Left lung (tissue), 14 donors: ENCODE measurements at regions of chr15 and their contacts with region 1.

Region 1: GRCh38 chr15:68775671-68776476 is 44.8 kb downstream of the ANP32A start:
- DNase-seq: peak in 2 of 4 donors; percentile 77 to 79
- ATAC-seq: peak; percentile 54
- H3K4me3 ChIP-seq: no peak overlapping the region
- H3K27ac ChIP-seq: peak overlapping the region; percentile 42 to 60
- H3K4me1 ChIP-seq: peaks cover 0 to 16% of the 10 kb centered on the region in 2 donors
- H3K27me3 ChIP-seq: no peaks in the 10 kb centered on the region
- CTCF ChIP-seq: no peak

Region 2: GRCh38 chr15:68598171-68599152 is 177.4 kb before region 1 on chr15:
- intact Hi-C with region 1: no loop called
- DNase-seq: no peak
- ATAC-seq: peak; percentile 45
- H3K4me3 ChIP-seq: no peak overlapping the region
- H3K27ac ChIP-seq: no peak overlapping the region
- H3K4me1 ChIP-seq: peaks cover 0 to 7% of the 10 kb centered on the region in 2 donors
- H3K27me3 ChIP-seq: no peaks in the 10 kb centered on the region
- CTCF ChIP-seq: no peak

Region 3: DNA sequence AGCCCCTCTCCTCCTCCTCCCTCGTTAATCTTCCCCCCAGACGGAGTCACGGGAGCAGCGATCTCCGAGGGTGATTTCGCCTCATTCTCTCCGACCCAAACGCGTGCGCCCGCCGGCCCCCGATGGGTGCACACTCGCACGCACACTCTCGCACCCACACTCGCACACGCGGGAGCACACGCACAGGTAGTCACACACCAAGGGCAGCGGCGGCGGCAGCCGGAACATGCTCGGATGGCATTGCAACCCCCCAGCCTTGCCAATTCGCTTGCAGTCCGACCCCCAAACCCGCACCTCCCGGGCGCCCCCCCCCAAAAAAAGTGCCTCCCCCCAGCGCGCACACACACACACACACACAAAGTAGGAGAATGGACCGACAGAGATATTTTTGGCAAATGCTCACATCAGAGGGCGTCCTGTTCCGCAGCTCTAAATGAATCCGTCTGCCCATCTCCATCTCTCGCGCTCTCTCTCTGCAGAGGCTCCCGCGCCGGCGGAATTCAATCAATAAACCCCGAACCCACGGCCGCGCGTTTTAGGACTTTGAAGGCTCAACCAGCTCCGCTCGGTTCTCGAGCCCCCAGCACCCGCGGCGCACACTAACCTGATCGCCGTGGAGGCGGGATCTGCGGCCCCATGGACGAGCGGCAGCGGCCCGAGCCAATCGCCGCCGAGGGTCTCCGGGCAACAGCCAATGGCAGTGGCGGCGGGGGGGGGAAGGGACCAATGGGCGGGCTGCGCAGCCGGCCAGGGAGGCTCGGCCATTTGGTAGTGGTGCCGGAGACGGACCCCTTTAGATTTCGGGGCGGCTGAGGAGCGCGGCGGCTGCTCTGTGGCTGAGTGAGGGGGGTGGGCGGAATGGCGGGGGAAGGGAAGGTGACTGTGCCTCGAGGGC is 44.7 kb after region 1 on chr15 and contains the start of gene ANP32A:
- intact Hi-C with region 1: loop called in 1 of 2 experiments (anchors 10 kb)
- DNase-seq: peak; percentile 95 to 96 (median 95)
- ATAC-seq: peak; percentile 82
- H3K4me3 ChIP-seq: peak within 1 kb of the TSS; percentile 66 to 90
- H3K27ac ChIP-seq: peak within 1 kb of the TSS; percentile 98 to 99
- H3K4me1 ChIP-seq: peaks cover 18 to 32% of the 10 kb centered on the region in 2 donors
- H3K27me3 ChIP-seq: no peaks in the 10 kb centered on the region
- CTCF ChIP-seq: no peak
- polyA plus RNA-seq, gene ANP32A: 280 to 346 (median 303) TPM

Region 4: GRCh38 chr15:68862415-68862814 is 86.5 kb after region 1 on chr15:
- intact Hi-C with region 1: no loop called
- DNase-seq: no peak
- ATAC-seq: no peak
- H3K4me3 ChIP-seq: no peak overlapping the region
- H3K27ac ChIP-seq: no peak overlapping the region
- H3K4me1 ChIP-seq: no peaks in the 10 kb centered on the region
- H3K27me3 ChIP-seq: no peaks in the 10 kb centered on the region
- CTCF ChIP-seq: no peak

Region 5: DNA sequence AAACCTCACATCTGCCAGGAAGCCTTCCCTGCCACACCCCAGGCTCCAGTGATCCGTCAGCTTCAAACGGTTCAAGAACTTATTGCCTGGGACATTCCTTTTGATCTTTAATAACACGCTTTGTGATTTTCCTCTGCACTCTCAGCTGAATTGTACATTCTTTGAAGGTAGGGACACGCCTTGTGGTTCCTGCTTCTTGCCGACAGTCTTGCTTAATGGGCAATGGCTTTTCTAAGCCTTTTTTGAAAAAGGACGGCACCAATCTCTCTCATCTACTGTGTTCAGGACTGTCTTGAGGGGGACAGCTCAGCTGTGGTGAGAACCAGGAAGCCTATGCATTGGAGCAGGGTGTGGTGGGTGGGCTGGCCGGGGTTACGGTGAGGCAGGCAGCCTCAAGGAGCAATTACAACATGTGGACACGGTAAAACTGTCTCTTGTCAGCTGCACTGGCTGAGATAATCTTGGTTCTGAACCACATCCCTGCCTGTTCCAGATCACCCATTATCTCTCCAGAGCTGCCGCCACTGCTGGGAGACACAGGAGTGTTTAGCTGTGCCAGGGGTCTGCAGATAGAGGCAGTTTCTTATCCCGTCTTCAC is 338.6 kb after region 1 on chr15:
- intact Hi-C with region 1: no loop called
- DNase-seq: no peak
- ATAC-seq: peak; percentile 27
- H3K4me3 ChIP-seq: no peak overlapping the region
- H3K27ac ChIP-seq: no peak overlapping the region
- H3K4me1 ChIP-seq: no peaks in the 10 kb centered on the region
- H3K27me3 ChIP-seq: no peaks in the 10 kb centered on the region
- CTCF ChIP-seq: no peak